ENCODE measurements at regions of chr22 and their contacts with region 1.

Region 1: GRCh38 chr22:43273902-43274484 is 69.2 kb downstream of the SCUBE1 start:
- DNase-seq: peak; percentile 54 to 77 (median 63)
- H3K4me3 ChIP-seq: no peak overlapping the region
- H3K27ac ChIP-seq: peak overlapping the region in 2 of 5 donors; percentile 74
- H3K4me1 ChIP-seq: peaks cover 0 to 9% of the 10 kb centered on the region in 2 donors
- H3K27me3 ChIP-seq: no peaks in the 10 kb centered on the region
- CTCF ChIP-seq: peak; percentile 58 to 85 (median 77)
- POLR2A ChIP-seq: no peak

Region 2: GRCh38 chr22:43230971-43231723 is 42.8 kb before region 1 on chr22:
- intact Hi-C with region 1: loop called in 1 of 2 experiments (anchors 5 kb)
- DNase-seq: peak; percentile 52 to 82 (median 67)
- H3K4me3 ChIP-seq: no peak overlapping the region
- H3K27ac ChIP-seq: no peak overlapping the region
- H3K4me1 ChIP-seq: peaks cover 9 to 11% of the 10 kb centered on the region in 2 donors
- H3K27me3 ChIP-seq: no peaks in the 10 kb centered on the region
- CTCF ChIP-seq: peak; percentile 90 to 94 (median 91)
- POLR2A ChIP-seq: no peak

Region 3: GRCh38 chr22:43346521-43346929 is 72.5 kb after region 1 on chr22:
- intact Hi-C with region 1: loop called in 1 of 2 experiments (anchors 2 kb)
- DNase-seq: peak; percentile 50 to 77 (median 62)
- H3K4me3 ChIP-seq: no peak overlapping the region
- H3K27ac ChIP-seq: no peak overlapping the region
- H3K4me1 ChIP-seq: peaks cover 0 to 9% of the 10 kb centered on the region in 2 donors
- H3K27me3 ChIP-seq: peaks cover 4% of the 10 kb centered on the region
- CTCF ChIP-seq: peak; percentile 46 to 76 (median 64)
- POLR2A ChIP-seq: no peak

Region 4: GRCh38 chr22:43670513-43670912 is 396.5 kb after region 1 on chr22:
- intact Hi-C with region 1: no loop called
- DNase-seq: no peak
- H3K4me3 ChIP-seq: no peak overlapping the region
- H3K27ac ChIP-seq: no peak overlapping the region
- H3K4me1 ChIP-seq: no peaks in the 10 kb centered on the region
- H3K27me3 ChIP-seq: no peaks in the 10 kb centered on the region
- CTCF ChIP-seq: no peak
- POLR2A ChIP-seq: no peak